ENCODE measurements at regions of chr11 and their contacts with region 1.

Region 1: GRCh38 chr11:128226106-128226716 is 361.1 kb downstream of the ETS1 start:
- DNase-seq: no peak
- H3K4me3 Mint-ChIP-seq: peak overlapping the region; percentile 53
- H3K27ac Mint-ChIP-seq: peak overlapping the region; percentile 97
- H3K4me1 Mint-ChIP-seq: peaks cover 49% of the 10 kb centered on the region
- H3K27me3 Mint-ChIP-seq: no peaks in the 10 kb centered on the region

Region 2: DNA sequence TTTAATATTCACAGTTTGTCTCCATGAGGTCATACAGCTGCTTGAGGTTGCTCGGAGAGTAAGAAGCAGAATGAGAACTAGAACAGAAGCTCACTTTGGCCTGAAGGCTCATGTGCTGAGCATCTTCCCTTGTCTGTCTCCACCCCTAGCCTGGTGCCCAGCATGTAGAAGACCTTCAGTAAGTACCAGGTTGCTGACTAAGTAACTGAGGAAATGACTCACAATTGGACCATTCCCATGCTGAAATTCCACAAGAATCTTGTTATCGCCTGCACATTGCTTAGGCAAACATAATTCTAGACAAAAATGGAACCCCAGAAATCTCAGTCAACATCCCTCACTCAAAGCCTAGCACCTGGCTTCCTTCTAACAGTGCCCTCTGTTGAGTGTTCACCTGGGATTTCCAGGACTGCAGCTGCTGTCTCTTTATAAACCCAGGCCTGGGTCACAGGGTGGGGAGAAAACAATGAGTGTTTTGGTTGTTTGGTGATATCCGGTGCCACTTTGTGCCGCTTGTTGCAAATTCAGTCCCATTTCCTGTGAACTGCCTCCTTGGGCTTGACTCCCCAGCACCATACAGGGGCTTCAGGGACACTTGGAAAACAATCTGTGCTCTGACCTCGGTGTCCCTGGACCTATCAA is 45.6 kb before region 1 on chr11:
- intact Hi-C with region 1: loop called (anchors 1 kb)
- DNase-seq: no peak
- H3K4me3 Mint-ChIP-seq: no peak overlapping the region
- H3K27ac Mint-ChIP-seq: peak overlapping the region; percentile 44
- H3K4me1 Mint-ChIP-seq: peaks cover 61% of the 10 kb centered on the region
- H3K27me3 Mint-ChIP-seq: no peaks in the 10 kb centered on the region

Region 3: GRCh38 chr11:128195057-128195751 is 31.0 kb before region 1 on chr11:
- intact Hi-C with region 1: loop called (anchors 1 kb)
- DNase-seq: peak; percentile 26
- H3K4me3 Mint-ChIP-seq: no peak overlapping the region
- H3K27ac Mint-ChIP-seq: peak overlapping the region; percentile 29
- H3K4me1 Mint-ChIP-seq: peaks cover 42% of the 10 kb centered on the region
- H3K27me3 Mint-ChIP-seq: peaks cover 1% of the 10 kb centered on the region

Region 4: GRCh38 chr11:128201801-128202200 is 24.4 kb before region 1 on chr11:
- intact Hi-C with region 1: loop called (anchors 1 kb)
- DNase-seq: no peak
- H3K4me3 Mint-ChIP-seq: no peak overlapping the region
- H3K27ac Mint-ChIP-seq: peak overlapping the region; percentile 43
- H3K4me1 Mint-ChIP-seq: peaks cover 33% of the 10 kb centered on the region
- H3K27me3 Mint-ChIP-seq: no peaks in the 10 kb centered on the region

Region 5: GRCh38 chr11:128208329-128209137 is 17.7 kb before region 1 on chr11:
- intact Hi-C with region 1: loop called (anchors 1 kb)
- DNase-seq: no peak
- H3K4me3 Mint-ChIP-seq: no peak overlapping the region
- H3K27ac Mint-ChIP-seq: no peak overlapping the region
- H3K4me1 Mint-ChIP-seq: peaks cover 19% of the 10 kb centered on the region
- H3K27me3 Mint-ChIP-seq: no peaks in the 10 kb centered on the region

Measured in activated T-helper 2 cell treated with anti-CD3 and anti-CD28 coated beads, Interferon-gamma antibody, Interleukin-2, Interleukin-4, amounts not matched to agents 10 μg/mL and 5 μg/mL and 100 μg/mL, durations not matched to agents 14 hours and 24 hours and 36 hours (primary cell).